ENCODE measurements at regions of chr11 and their contacts with region 1.

Region 1: GRCh38 chr11:67507864-67508485 is at the start of gene CDK2AP2:
- DNase-seq: peak; percentile 99
- H3K4me3 Mint-ChIP-seq: peak within 1 kb of the TSS; percentile 95
- H3K27ac Mint-ChIP-seq: peak within 1 kb of the TSS; percentile 97
- H3K4me1 Mint-ChIP-seq: peaks cover 35% of the 10 kb centered on the region
- H3K27me3 Mint-ChIP-seq: peaks cover 10% of the 10 kb centered on the region
- total RNA-seq, gene CDK2AP2: 93.5 and 97.9 TPM in 2 replicates

Region 2: GRCh38 chr11:67353317-67354074 is 154.5 kb before region 1 on chr11 and contains the start of gene POLD4:
- intact Hi-C with region 1: loop called (anchors 2 kb)
- DNase-seq: peak; percentile 99
- H3K4me3 Mint-ChIP-seq: peak within 1 kb of the TSS; percentile 97
- H3K27ac Mint-ChIP-seq: peak within 1 kb of the TSS; percentile 98
- H3K4me1 Mint-ChIP-seq: peaks cover 41% of the 10 kb centered on the region
- H3K27me3 Mint-ChIP-seq: peaks cover 5% of the 10 kb centered on the region
- total RNA-seq, gene POLD4: 36.0 and 36.4 TPM in 2 replicates

Region 3: DNA sequence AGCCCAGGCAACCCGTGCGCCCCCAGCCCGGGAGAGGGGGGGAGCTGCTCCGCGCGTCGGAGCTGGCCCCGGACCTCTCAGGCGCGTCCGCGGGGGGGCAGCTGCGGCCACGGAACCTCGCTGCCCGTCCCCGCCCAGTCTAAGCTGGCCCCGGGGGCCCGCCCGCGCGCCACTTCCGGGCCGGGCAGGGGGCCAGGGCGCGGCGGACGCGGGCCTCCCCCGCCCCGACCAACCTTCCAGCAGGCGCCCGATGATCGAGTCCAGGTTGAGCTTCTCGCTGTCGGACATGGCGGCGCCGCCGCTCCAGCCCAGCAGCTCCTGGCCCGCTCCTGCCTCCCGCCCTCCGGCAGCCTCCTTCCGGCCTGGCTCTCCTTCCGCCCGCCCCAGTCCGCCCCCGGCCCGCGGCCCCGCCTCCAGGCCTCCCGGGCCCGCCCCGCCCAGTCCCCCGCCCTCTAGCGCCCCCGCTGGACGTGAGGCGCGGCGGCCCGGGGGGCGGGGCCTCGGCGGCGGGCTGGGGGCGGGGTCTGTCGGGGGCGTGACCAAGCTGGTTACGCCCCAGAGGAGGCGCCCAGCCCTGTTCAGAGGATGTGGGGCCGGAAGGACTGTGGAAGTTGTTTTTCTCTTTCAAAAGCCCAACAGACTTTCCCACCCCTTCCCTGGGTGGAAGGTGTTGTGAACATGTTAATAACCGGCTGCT is 106.3 kb before region 1 on chr11 and contains the start of gene PPP1CA:
- intact Hi-C with region 1: loop called (anchors 1 kb)
- DNase-seq: peak; percentile 96
- H3K4me3 Mint-ChIP-seq: peak within 1 kb of the TSS; percentile 91
- H3K27ac Mint-ChIP-seq: peak within 1 kb of the TSS; percentile 87
- H3K4me1 Mint-ChIP-seq: peaks cover 45% of the 10 kb centered on the region
- H3K27me3 Mint-ChIP-seq: no peaks in the 10 kb centered on the region
- total RNA-seq, gene PPP1CA: 251 and 252 TPM in 2 replicates

Region 4: DNA sequence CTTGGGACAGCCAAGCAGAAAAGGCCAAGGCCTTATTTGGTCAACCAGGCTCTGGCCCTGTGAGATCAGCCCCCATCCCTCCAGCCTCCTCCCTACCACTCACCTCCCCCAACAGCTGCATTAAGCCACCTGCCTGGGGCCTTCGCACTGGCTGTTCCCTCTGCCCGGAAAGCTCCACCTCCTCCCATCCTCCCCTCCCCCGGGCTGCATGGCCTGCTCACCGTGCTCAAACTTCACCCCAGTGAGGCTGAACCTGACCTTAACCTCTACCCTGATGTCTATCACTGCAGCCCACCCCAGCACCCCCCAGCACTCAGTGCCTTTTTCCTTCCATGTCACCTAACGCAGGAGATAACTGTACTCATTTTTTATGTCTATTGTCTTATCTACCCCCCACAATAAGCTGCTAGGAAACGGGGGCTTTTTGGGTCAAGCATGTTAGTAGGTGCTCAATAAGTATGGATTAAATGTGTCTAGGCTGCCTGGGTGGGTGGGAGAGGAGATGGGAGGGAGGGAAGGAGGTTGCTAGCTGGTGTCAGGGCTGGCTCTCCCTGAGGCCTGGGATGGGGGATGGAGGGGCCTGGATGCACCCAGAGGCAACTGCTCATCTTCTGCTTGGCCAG is 71.4 kb before region 1 on chr11:
- intact Hi-C with region 1: loop called (anchors 1 kb)
- DNase-seq: peak; percentile 90
- H3K4me3 Mint-ChIP-seq: peak overlapping the region; percentile 99
- H3K27ac Mint-ChIP-seq: peak overlapping the region; percentile 82
- H3K4me1 Mint-ChIP-seq: peaks cover 44% of the 10 kb centered on the region
- H3K27me3 Mint-ChIP-seq: no peaks in the 10 kb centered on the region

Region 5: GRCh38 chr11:67482825-67483798 is 24.9 kb before region 1 on chr11 and contains the start of gene AIP:
- intact Hi-C with region 1: loop called (anchors 1 kb)
- DNase-seq: peak; percentile 99
- H3K4me3 Mint-ChIP-seq: peak within 1 kb of the TSS; percentile 96
- H3K27ac Mint-ChIP-seq: peak within 1 kb of the TSS; percentile 99
- H3K4me1 Mint-ChIP-seq: peaks cover 47% of the 10 kb centered on the region
- H3K27me3 Mint-ChIP-seq: peaks cover 5% of the 10 kb centered on the region
- total RNA-seq, gene AIP: 186 and 189 TPM in 2 replicates

Region 6: DNA sequence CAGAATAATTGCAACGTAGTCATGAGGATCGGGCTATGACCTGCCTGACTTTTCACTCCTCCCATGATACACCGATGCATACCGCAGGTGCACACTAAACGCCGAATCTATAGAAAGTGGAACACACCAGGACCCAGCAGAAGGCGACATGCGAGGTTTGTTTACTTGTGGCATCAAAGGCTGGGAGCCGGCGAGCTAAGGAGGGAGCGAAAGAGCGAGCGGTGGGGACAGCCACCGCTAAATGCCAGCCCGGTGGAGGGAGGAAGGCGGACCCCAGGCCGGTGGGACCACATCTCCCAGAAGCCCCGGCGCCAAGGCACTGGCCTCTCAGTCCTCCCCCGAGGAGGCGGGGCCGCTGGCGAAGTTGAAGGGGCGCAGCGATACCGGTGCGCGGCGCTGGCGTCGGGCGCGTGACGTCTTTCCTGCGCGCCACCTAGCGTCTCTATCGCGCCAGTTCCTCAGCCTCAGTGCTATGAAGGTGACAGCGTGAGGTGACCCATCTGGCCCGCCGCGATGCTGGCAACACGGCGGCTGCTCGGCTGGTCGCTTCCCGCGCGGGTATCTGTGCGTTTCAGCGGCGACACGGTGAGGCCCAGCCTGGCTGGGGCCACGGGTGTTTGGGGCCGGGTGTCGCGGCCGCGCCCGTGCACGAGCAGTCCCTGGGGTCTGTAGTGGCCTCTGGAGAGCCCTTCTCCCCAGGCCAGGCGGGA is 98.7 kb after region 1 on chr11 and contains the start of gene NDUFV1:
- intact Hi-C with region 1: loop called (anchors 2 kb)
- DNase-seq: peak; percentile 99
- H3K4me3 Mint-ChIP-seq: peak within 1 kb of the TSS; percentile 95
- H3K27ac Mint-ChIP-seq: peak within 1 kb of the TSS; percentile 95
- H3K4me1 Mint-ChIP-seq: peaks cover 18% of the 10 kb centered on the region
- H3K27me3 Mint-ChIP-seq: peaks cover 10% of the 10 kb centered on the region
- total RNA-seq, gene NDUFV1: 304 and 321 TPM in 2 replicates